ENCODE measurements at regions of chr12 and their contacts with region 1.

Region 1: DNA sequence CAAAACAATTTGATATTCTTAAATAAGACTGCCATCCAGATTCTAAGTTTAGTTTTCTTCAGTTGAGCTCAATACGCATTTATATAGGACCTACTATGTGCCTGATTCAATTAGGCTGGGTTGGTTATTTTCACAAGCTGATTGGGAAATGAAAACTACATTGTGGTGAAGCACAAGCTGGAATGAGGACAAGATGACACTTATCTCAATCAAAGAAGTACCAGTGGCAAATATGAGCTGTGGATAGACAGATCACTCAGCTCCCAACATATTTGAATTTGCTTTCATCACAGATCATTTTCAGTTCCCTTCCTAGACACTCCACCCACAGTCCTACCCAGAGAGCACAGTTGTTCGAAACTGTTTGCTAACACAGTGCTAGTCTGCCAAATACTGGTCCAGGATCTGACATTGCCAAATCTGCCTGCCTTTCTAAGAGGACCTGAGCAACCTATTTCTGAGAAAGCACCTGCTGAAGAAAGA is 74.7 kb downstream of the LLPH start:
- DNase-seq: no peak
- ATAC-seq: no peak

Region 2: GRCh38 chr12:66693901-66694675 is 638.2 kb after region 1 on chr12:
- intact Hi-C with region 1: no loop called
- DNase-seq: no peak
- ATAC-seq: peak; percentile 63

Region 3: GRCh38 chr12:66851134-66851533 is 795.3 kb after region 1 on chr12:
- intact Hi-C with region 1: loop called (anchors 10 kb)
- DNase-seq: no peak
- ATAC-seq: no peak